GM12878 (cell line): ENCODE measurements at regions of chr1 and their contacts with region 1.

Region 1: GRCh38 chr1:1615256-1616044 is at the start of gene MIB2:
- DNase-seq: peak; percentile 87
- ATAC-seq: peak; percentile 95
- H3K4me3 ChIP-seq: peak within 1 kb of the TSS; percentile 85
- H3K27ac ChIP-seq: peak within 1 kb of the TSS; percentile 98
- H3K4me1 ChIP-seq: peaks cover 15% of the 10 kb centered on the region
- H3K27me3 ChIP-seq: no peaks in the 10 kb centered on the region; a peak in 1 of 4 replicates
- CTCF ChIP-seq: no peak
- EP300 ChIP-seq: no peak; a peak in 1 of 4 replicates
- POLR2A ChIP-seq: peak; percentile 93
- RAD21 ChIP-seq: no peak
- polyA plus RNA-seq, gene MIB2: 0.42 TPM in 1 of 2 experiments, not detected in the other

Region 2: GRCh38 chr1:1574721-1575537 is 40.5 kb before region 1 on chr1 and contains the start of gene SSU72:
- CTCF ChIA-PET with region 1: no interaction called
- POLR2A ChIA-PET with region 1: interaction called, 7 read pairs
- RAD21 ChIA-PET with region 1: interaction called, 3 read pairs
- SMC1A ChIA-PET with region 1: interaction called, 3 read pairs
- in situ Hi-C with region 1: no loop called
- intact Hi-C with region 1: loop called (anchors 5 kb)
- DNase-seq: peak; percentile 35
- ATAC-seq: peak; percentile 70
- H3K4me3 ChIP-seq: peak within 1 kb of the TSS; percentile 98
- H3K27ac ChIP-seq: peak within 1 kb of the TSS; percentile 82
- H3K4me1 ChIP-seq: no peaks in the 10 kb centered on the region
- H3K27me3 ChIP-seq: no peaks in the 10 kb centered on the region
- CTCF ChIP-seq: no peak
- EP300 ChIP-seq: no peak; a peak in 1 of 4 replicates
- POLR2A ChIP-seq: peak; percentile 94
- RAD21 ChIP-seq: no peak
- polyA plus RNA-seq, gene SSU72: 28.6 to 60.5 TPM